Endothelial cell of umbilical vein (primary cell): ENCODE measurements at regions of chr15 and their contacts with region 1.

Region 1: DNA sequence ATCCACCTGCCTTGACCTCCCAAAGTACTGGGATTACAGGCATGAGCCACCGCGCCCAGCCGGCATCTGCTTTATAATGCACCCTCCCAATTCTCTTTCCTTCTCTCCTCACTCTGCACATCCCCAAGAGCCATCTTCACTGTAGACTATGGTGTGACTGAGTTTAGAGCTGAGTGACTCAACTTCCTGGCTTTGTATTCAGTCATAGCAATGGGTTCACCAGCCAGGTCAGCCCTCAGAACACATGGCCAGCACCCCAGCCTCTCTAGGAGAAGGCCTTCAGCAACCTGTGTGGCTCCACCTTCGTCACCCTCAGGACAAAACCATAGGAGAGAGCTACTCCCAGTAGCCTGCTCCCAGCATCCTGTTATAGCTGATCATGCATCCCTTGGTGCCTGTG is 33.0 kb downstream of the ARID3B start:
- DNase-seq: peak; percentile 72
- H3K4me3 ChIP-seq: no peak overlapping the region
- H3K27ac ChIP-seq: peak overlapping the region; percentile 86
- H3K4me1 ChIP-seq: peaks cover 21% of the 10 kb centered on the region
- H3K27me3 ChIP-seq: no peaks in the 10 kb centered on the region
- CTCF ChIP-seq: no peak
- POLR2A ChIP-seq: no peak

Region 2: GRCh38 chr15:74589826-74590225 is 15.8 kb after region 1 on chr15:
- CTCF ChIA-PET with region 1: interaction called, 10 read pairs
- POLR2A ChIA-PET with region 1: no interaction called
- dilution Hi-C with region 1: no loop called
- intact Hi-C with region 1: loop called (anchors 2 kb)
- DNase-seq: peak; percentile 36
- H3K4me3 ChIP-seq: no peak overlapping the region
- H3K27ac ChIP-seq: peak overlapping the region; percentile 73
- H3K4me1 ChIP-seq: peaks cover 24% of the 10 kb centered on the region
- H3K27me3 ChIP-seq: no peaks in the 10 kb centered on the region
- CTCF ChIP-seq: no peak
- POLR2A ChIP-seq: no peak

Region 3: DNA sequence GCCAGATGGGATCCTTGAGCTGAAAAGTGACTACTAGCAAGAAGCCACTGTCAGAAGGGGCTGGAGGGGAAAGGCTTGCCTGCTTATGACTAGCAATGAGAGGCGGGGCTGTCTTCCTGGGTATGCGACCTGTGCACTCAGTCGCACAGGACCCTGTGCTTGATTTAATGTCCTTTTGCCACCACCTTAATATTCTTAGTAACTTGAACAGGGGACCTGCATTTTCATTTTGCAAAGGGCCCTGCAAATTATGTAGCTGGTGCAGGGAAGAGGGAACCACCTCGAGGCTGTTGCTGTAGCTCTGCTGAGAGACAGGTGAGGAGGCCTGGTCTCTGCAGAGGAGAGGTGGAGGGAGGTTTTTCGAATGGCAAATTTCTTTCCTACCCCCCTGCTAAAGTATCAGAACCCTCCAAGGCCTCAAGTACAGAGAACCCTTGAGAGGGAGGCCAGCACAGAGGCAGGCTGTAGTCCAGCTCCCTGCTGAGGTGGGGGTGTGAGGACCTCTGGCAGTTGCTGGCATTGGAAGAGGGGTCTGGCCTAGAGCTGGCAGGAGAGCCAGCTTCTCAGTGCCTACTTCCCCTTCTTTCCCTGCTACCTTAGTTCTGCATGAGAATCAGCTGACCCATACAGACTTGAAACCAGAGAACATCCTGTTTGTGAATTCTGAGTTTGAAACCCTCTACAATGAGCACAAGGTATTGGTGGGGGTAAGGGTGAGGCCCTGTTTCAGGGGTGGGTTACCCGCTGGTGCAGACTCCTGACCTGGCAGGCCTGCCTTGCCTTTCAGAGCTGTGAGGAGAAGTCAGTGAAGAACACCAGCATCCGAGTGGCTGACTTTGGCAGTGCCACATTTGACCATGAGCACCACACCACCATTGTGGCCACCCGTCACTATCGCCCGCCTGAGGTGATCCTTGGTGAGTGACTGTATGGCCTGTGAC is 53.0 kb after region 1 on chr15:
- CTCF ChIA-PET with region 1: no interaction called
- POLR2A ChIA-PET with region 1: no interaction called
- dilution Hi-C with region 1: no loop called
- intact Hi-C with region 1: no loop called
- DNase-seq: no peak
- H3K4me3 ChIP-seq: no peak overlapping the region
- H3K27ac ChIP-seq: no peak overlapping the region
- H3K4me1 ChIP-seq: no peaks in the 10 kb centered on the region
- H3K27me3 ChIP-seq: no peaks in the 10 kb centered on the region
- CTCF ChIP-seq: no peak
- POLR2A ChIP-seq: no peak

Region 4: GRCh38 chr15:74642729-74643367 is 68.9 kb after region 1 on chr15:
- CTCF ChIA-PET with region 1: no interaction called
- POLR2A ChIA-PET with region 1: no interaction called
- dilution Hi-C with region 1: no loop called
- intact Hi-C with region 1: no loop called
- DNase-seq: peak; percentile 87
- H3K4me3 ChIP-seq: no peak overlapping the region
- H3K27ac ChIP-seq: peak overlapping the region; percentile 16
- H3K4me1 ChIP-seq: peaks cover 18% of the 10 kb centered on the region
- H3K27me3 ChIP-seq: no peaks in the 10 kb centered on the region
- CTCF ChIP-seq: no peak
- POLR2A ChIP-seq: no peak